Sigmoid colon (tissue), 7 donors: ENCODE measurements at regions of chr5 and their contacts with region 1.

Region 1: GRCh38 chr5:37598733-37599132 is 219.6 kb downstream of the WDR70 start:
- DNase-seq: no peak
- H3K4me3 ChIP-seq: no peak overlapping the region
- H3K27ac ChIP-seq: peak overlapping the region in 2 of 4 donors; percentile 53 to 76
- H3K4me1 ChIP-seq: peaks cover 0 to 59% (median 37%) of the 10 kb centered on the region in 4 donors
- H3K27me3 ChIP-seq: no peaks in the 10 kb centered on the region
- CTCF ChIP-seq: no peak
- EP300 ChIP-seq: peak in 2 of 4 donors; percentile 16 to 58
- POLR2A ChIP-seq: no peak

Region 2: GRCh38 chr5:37355166-37355565 is 243.6 kb before region 1 on chr5:
- intact Hi-C with region 1: no loop called
- DNase-seq: no peak
- H3K4me3 ChIP-seq: no peak overlapping the region
- H3K27ac ChIP-seq: no peak overlapping the region
- H3K4me1 ChIP-seq: no peaks in the 10 kb centered on the region
- H3K27me3 ChIP-seq: no peaks in the 10 kb centered on the region
- CTCF ChIP-seq: no peak
- EP300 ChIP-seq: no peak
- POLR2A ChIP-seq: no peak

Region 3: GRCh38 chr5:37412515-37413277 is 186.0 kb before region 1 on chr5:
- intact Hi-C with region 1: loop called (anchors 5 kb)
- DNase-seq: peak; percentile 74
- H3K4me3 ChIP-seq: no peak overlapping the region
- H3K27ac ChIP-seq: no peak overlapping the region
- H3K4me1 ChIP-seq: peaks cover 0 to 4% (median 0%) of the 10 kb centered on the region in 4 donors
- H3K27me3 ChIP-seq: no peaks in the 10 kb centered on the region
- CTCF ChIP-seq: peak; percentile 88 to 97 (median 90)
- EP300 ChIP-seq: no peak
- POLR2A ChIP-seq: no peak

Region 4: DNA sequence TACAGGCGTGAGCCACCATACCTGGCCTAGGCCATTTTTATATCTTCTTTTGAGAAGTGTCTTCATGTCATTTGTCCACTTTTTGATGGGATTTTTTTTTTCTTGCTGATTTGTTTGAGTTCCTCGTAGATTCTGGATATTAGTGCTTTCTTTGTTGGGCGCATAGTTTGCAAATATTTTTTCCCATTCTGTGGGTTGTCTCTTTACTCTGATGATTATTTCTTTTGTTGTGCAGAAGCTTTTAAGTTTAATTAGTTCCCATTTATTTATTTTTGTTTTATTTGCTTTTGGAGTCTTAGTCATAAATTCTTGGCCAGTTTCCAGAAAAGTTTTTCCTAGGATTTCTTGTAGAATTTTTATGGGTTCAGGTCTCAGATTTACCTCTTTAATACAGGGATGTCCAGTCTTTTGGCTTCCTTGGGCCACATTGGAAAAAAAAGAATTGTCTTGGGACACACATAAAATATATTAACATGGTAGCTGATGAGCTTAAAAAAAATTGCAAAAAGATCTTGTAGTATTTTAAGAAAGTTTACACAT is 97.7 kb before region 1 on chr5:
- intact Hi-C with region 1: loop called (anchors 5 kb)
- DNase-seq: no peak
- H3K4me3 ChIP-seq: no peak overlapping the region
- H3K27ac ChIP-seq: no peak overlapping the region
- H3K4me1 ChIP-seq: peaks cover 0 to 14% (median 6%) of the 10 kb centered on the region in 4 donors
- H3K27me3 ChIP-seq: no peaks in the 10 kb centered on the region
- CTCF ChIP-seq: no peak
- EP300 ChIP-seq: no peak
- POLR2A ChIP-seq: no peak

Region 5: GRCh38 chr5:37532976-37533740 is 65.6 kb before region 1 on chr5:
- intact Hi-C with region 1: no loop called
- DNase-seq: no peak
- H3K4me3 ChIP-seq: no peak overlapping the region
- H3K27ac ChIP-seq: no peak overlapping the region
- H3K4me1 ChIP-seq: no peaks in the 10 kb centered on the region
- H3K27me3 ChIP-seq: no peaks in the 10 kb centered on the region
- CTCF ChIP-seq: no peak
- EP300 ChIP-seq: no peak
- POLR2A ChIP-seq: no peak

Region 6: GRCh38 chr5:37543216-37543615 is 55.5 kb before region 1 on chr5:
- intact Hi-C with region 1: no loop called
- DNase-seq: no peak
- H3K4me3 ChIP-seq: no peak overlapping the region
- H3K27ac ChIP-seq: no peak overlapping the region
- H3K4me1 ChIP-seq: no peaks in the 10 kb centered on the region
- H3K27me3 ChIP-seq: no peaks in the 10 kb centered on the region
- CTCF ChIP-seq: no peak
- EP300 ChIP-seq: no peak
- POLR2A ChIP-seq: no peak

Region 7: DNA sequence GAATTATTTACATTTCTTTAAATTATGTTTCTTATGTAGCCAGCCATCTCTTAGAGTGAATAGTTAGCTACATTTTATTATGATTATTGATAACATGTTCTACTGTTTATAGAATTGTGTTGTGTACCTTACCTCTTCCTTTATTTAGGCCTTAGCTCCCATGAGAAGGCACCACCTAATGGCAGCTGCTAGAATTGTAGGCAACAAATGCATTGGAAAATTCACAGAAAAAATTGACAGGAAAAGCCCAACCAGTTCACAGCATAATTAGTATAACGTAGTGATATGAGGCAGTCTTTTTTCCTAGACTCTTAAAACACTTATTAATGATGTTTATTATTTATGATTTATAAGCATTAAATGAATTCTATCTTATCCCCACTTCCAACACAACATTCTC is 43.8 kb before region 1 on chr5:
- intact Hi-C with region 1: loop called (anchors 5 kb)
- DNase-seq: no peak
- H3K4me3 ChIP-seq: no peak overlapping the region
- H3K27ac ChIP-seq: peak overlapping the region in 2 of 4 donors; percentile 62 to 70
- H3K4me1 ChIP-seq: peaks cover 0 to 17% (median 15%) of the 10 kb centered on the region in 4 donors
- H3K27me3 ChIP-seq: no peaks in the 10 kb centered on the region
- CTCF ChIP-seq: no peak
- EP300 ChIP-seq: no peak
- POLR2A ChIP-seq: no peak